ENCODE measurements at regions of chr2 and their contacts with region 1.

Region 1: DNA sequence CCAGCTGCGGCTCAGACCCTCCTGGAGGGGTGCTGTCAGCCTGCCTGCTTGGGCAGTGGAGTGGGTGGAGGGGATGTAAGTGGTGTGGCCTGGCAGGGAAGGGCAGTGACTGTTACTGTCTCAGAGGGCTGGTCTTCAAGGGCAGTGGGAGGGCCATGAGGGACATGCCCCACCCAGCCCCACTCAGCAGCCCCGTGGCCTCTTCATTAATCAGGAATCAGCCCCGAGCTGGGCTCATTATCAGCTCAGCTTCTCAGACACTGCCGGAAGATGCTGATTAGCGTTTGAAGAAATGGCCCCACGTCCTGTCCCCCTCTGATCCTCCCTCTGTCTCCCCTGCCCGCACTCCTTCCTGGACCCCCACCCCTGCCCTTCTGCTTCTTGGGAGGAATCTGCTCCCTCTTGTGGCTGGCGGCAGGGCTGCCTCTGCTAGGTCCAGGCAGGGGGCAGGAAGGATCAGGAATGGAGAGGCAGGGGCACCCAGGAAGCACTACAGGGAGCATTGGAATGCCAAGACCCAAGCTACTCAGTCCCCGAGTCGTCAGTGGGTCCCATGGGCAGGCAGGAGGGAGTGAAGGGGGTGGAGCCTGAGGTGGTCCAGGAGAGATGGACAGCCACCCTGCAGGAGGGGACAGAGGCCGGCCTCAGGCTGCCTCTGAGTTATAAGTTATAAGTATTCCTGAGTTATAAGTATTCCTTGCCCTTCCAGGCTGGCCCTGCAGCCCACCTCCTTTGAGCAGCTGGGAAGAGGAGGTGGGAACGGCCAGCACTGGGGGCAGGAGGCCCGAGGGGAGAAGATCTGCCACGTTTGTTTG is 7.0 kb downstream of the ASIC4 start:
- DNase-seq: peak; percentile 73
- H3K4me3 ChIP-seq: no peak overlapping the region
- H3K27ac ChIP-seq: peak overlapping the region; percentile 38
- H3K4me1 ChIP-seq: peaks cover 29% of the 10 kb centered on the region
- H3K27me3 ChIP-seq: no peaks in the 10 kb centered on the region
- CTCF ChIP-seq: peak; percentile 77

Region 2: DNA sequence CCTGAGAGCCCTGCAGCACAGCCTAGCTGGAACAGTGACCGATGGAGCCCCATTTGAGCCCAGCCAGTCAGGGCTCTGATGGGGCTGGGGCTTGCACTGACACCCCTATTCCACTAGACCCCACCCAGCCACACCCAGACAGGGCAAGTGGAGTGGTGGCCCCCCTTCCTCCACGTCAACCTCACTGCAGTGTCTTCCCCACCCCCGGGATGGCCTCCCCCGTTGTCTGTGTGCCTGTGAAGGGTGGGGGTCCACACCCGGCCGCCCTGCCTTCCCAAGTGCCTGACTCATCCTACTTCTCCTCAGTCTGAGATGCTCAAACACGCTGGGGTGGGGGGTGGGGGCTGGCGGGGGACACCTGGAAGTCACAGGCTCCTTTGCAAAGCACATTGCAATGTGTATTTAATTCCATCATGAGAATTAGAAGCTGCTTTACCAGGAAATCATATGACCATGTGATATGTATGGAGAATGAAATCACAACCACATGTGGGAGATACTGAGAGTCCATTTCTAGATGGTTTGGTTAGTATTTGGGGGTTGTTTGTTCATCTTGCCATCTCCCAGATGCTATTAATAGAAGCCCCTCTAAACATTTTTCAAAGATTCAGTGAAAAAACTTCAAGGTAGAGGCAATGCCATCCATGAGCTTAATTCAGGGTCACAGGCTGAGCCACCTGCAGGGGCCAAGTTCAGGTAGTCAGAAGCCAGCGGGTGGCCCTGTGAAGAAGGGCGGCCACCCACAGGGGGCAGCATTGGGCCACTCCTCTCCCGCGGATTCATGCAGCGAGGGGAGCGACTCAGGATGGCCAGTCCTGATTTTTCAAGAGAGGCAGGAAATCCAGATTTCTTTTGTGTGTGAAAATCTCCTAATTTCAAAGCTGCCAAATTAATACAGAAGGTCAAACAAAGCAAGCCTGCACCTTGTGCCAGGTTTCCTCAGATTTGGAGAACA is 45.3 kb before region 1 on chr2:
- CTCF ChIA-PET with region 1: no interaction called
- POLR2A ChIA-PET with region 1: no interaction called
- intact Hi-C with region 1: loop called (anchors 5 kb)
- DNase-seq: peak; percentile 66
- H3K4me3 ChIP-seq: no peak overlapping the region
- H3K27ac ChIP-seq: no peak overlapping the region
- H3K4me1 ChIP-seq: peaks cover 4% of the 10 kb centered on the region
- H3K27me3 ChIP-seq: no peaks in the 10 kb centered on the region
- CTCF ChIP-seq: peak; percentile 91

Region 3: GRCh38 chr2:219498280-219499057 is 22.8 kb before region 1 on chr2 and contains the start of gene GMPPA:
- CTCF ChIA-PET with region 1: interaction called, 31 read pairs
- POLR2A ChIA-PET with region 1: no interaction called
- intact Hi-C with region 1: no loop called
- DNase-seq: peak; percentile 99
- H3K4me3 ChIP-seq: peak within 1 kb of the TSS; percentile 57
- H3K27ac ChIP-seq: peak within 1 kb of the TSS; percentile 79
- H3K4me1 ChIP-seq: peaks cover 26% of the 10 kb centered on the region
- H3K27me3 ChIP-seq: no peaks in the 10 kb centered on the region
- CTCF ChIP-seq: no peak
- total RNA-seq, gene GMPPA: 32.1 and 45.8 TPM in 2 replicates

Region 4: DNA sequence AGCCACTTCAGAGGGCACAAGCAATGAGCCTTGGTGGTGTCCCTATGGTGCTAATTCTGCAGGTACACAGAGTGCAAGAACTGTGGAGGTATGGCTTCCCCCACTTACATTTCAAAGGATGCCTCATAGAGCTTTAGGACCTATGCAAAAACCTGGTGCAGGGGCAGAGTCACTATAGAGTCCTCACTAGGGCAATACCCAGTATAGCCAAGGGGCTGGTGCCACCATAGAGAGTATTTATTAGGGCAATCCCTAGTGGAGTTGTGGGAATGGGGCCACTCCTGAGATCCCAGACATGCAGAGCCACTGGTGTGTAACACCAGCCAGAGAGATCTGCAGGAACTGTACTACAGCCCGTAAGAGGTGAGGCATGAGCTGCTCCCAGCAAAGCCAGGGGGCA is 418.4 kb after region 1 on chr2:
- CTCF ChIA-PET with region 1: no interaction called
- POLR2A ChIA-PET with region 1: no interaction called
- intact Hi-C with region 1: no loop called
- DNase-seq: no peak
- H3K4me3 ChIP-seq: no peak overlapping the region
- H3K27ac ChIP-seq: no peak overlapping the region
- H3K4me1 ChIP-seq: no peaks in the 10 kb centered on the region
- H3K27me3 ChIP-seq: no peaks in the 10 kb centered on the region
- CTCF ChIP-seq: no peak

Region 5: DNA sequence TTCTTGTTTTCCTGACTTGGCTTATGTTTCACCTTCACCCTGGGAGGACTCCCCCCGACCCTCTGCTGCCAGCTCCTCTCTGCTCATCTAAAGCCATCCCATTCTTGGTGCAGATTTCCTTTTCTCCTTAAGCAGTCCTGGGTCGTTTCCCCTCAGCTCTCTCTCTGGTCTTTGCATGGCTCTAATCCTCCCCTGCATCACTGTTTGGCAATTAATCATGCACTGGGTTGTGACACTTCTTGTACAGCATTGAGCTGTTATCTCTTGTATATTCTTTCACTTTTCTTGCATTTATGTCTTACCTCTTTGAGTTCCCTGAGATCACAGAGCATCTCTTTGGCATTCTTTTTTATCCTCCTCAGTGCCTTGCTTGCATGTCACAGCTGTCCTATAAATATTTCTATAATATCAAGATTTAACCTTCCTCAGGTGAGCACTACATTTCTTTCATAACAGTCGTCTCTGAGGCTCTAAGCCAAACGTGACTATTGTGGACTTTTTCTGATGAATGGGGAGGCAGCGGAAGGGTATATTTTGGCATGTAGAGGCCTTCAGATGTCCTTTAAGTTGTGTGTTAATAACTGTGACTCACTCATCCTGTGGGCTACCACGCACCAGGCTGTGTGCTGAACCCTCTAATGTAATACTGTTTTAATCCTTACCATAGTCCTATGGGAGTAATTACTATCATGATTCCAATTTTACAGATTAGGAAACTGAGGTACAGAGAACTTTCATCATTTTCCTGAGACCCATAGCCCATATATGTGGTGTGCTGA is 613.7 kb after region 1 on chr2:
- CTCF ChIA-PET with region 1: no interaction called
- POLR2A ChIA-PET with region 1: no interaction called
- intact Hi-C with region 1: no loop called
- DNase-seq: no peak
- H3K4me3 ChIP-seq: no peak overlapping the region
- H3K27ac ChIP-seq: no peak overlapping the region
- H3K4me1 ChIP-seq: no peaks in the 10 kb centered on the region
- H3K27me3 ChIP-seq: no peaks in the 10 kb centered on the region
- CTCF ChIP-seq: no peak